Esophagus muscularis mucosa (tissue), 4 donors: ENCODE measurements at regions of chr2 and their contacts with region 1.

Region 1: DNA sequence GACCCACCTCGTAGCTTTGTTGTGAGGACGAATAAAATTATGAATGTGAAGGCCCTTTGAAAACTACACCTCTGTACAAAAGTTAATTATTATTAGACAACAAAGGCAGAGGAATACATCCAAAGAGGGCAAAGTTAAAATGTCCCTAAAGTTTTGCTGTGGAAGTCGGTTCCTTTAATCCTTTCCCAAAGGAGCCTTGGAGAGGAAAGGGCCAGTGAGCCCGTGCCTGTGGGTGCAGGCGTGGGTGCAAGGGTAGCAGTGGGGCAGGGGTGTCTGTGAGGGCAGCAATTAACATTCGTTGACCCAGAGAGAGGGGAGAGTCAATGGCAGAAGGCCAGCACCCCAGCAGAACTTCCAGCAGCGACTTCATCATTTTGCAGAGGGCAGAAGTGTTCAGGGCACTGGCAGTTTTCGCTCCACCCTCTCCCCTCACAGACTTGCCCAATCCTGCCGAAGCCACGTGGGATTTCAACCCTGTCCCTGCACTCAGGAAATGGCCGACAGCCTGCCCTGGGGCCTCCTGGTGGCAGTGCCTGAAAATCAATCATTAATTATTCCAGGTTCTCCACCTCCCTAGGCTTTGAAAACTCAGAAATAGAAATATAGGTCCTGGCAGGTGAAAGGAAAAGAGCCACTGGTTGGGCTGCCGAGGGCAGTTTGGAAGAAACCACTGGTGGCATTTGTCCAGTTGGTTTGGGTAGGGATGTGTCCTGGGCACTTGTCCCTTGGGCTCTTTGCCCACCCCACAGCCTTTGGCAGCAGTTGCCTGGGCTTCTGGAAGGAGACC is 4.2 kb upstream of the PAX8 start:
- DNase-seq: no peak
- H3K4me3 ChIP-seq: no peak overlapping the region
- H3K27ac ChIP-seq: peak overlapping the region; percentile 84 to 94 (median 88)
- H3K4me1 ChIP-seq: peaks cover 20 to 45% (median 38%) of the 10 kb centered on the region in 4 donors
- H3K27me3 ChIP-seq: peaks cover 0 to 11% (median 2%) of the 10 kb centered on the region in 4 donors
- CTCF ChIP-seq: peak in 2 of 3 experiments; percentile 26 to 37
- EP300 ChIP-seq: no peak
- POLR2A ChIP-seq: no peak

Region 2: DNA sequence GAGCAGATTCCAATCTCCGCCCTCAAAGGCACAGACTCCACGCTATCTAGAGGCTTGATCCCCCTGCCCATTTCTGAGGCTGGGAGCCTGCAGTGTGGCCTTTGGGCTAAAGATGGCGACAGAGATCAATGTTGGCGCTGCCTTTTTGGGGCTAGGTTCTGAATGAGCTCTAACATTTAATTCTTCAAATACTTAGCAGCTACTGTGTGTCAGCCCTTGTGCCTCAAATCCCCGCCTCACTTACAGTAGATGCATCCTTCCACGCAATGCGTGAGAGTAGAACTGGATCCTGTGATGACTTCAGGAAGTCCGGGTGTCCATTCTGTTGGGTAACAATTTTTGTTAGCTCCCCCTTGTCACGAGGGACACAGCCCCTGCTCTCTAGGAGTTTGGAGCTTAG is 202.8 kb before region 1 on chr2:
- intact Hi-C with region 1: no loop called
- DNase-seq: no peak
- H3K4me3 ChIP-seq: no peak overlapping the region
- H3K27ac ChIP-seq: no peak overlapping the region
- H3K4me1 ChIP-seq: no peaks in the 10 kb centered on the region
- H3K27me3 ChIP-seq: peaks cover 0 to 18% (median 0%) of the 10 kb centered on the region in 4 donors
- CTCF ChIP-seq: peak; percentile 17 to 43 (median 25)
- EP300 ChIP-seq: no peak
- POLR2A ChIP-seq: no peak

Region 3: GRCh38 chr2:113211226-113212105 is 71.5 kb before region 1 on chr2:
- intact Hi-C with region 1: no loop called
- DNase-seq: no peak
- H3K4me3 ChIP-seq: peak overlapping the region in 3 of 4 donors; percentile 9 to 13 (median 12)
- H3K27ac ChIP-seq: peak overlapping the region; percentile 60 to 68 (median 66)
- H3K4me1 ChIP-seq: peaks cover 27 to 46% (median 43%) of the 10 kb centered on the region in 4 donors
- H3K27me3 ChIP-seq: no peaks in the 10 kb centered on the region
- CTCF ChIP-seq: no peak
- EP300 ChIP-seq: no peak
- POLR2A ChIP-seq: no peak

Region 4: GRCh38 chr2:113324684-113325160 is 41.8 kb after region 1 on chr2:
- intact Hi-C with region 1: loop called (anchors 5 kb)
- DNase-seq: no peak
- H3K4me3 ChIP-seq: peak overlapping the region; percentile 47 to 62 (median 54)
- H3K27ac ChIP-seq: peak overlapping the region; percentile 70 to 81 (median 76)
- H3K4me1 ChIP-seq: peaks cover 0 to 31% (median 26%) of the 10 kb centered on the region in 4 donors
- H3K27me3 ChIP-seq: no peaks in the 10 kb centered on the region
- CTCF ChIP-seq: no peak
- EP300 ChIP-seq: no peak
- POLR2A ChIP-seq: no peak

Region 5: DNA sequence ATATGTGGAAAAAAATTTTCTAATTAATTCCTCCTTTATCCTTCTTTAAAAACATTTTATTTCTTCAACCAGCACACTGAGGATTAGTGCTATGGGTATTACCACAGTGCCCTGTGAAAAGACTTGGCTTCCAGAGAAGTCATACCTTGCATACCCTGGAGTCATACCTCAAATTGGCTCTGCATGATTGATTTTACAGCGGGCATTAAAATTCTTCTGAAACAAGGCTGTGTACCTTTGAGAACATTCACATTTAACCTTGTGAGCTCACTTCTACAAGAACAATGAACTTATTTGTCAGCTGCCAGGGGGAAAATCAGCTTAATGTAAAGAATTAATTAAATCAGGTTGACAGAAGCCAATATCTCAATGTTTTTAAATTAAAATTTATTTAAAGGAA is 428.9 kb after region 1 on chr2:
- intact Hi-C with region 1: no loop called
- DNase-seq: no peak
- H3K4me3 ChIP-seq: no peak overlapping the region
- H3K27ac ChIP-seq: no peak overlapping the region
- H3K4me1 ChIP-seq: no peaks in the 10 kb centered on the region
- H3K27me3 ChIP-seq: no peaks in the 10 kb centered on the region
- CTCF ChIP-seq: no peak
- EP300 ChIP-seq: no peak
- POLR2A ChIP-seq: no peak

Region 6: DNA sequence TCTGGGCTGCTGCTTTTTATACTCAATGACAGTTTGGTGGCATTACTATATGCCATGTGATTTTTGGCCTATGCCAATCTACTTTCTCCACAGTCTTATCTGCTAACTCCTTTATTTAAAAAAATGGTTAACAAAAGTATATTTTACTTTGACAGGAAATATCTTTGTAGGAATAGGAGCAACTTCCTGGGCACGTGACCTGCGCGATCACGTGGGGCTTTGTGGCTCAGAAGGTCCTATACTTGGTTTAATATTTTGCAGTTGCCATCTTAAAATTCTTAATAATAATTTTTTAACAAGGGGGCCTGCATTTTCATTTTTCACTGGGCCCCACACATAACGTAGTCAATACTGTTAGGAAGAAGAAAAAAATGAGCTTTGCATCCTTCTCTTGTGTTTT is 856.6 kb after region 1 on chr2:
- intact Hi-C with region 1: no loop called
- DNase-seq: peak; percentile 47
- H3K4me3 ChIP-seq: no peak overlapping the region
- H3K27ac ChIP-seq: no peak overlapping the region
- H3K4me1 ChIP-seq: no peaks in the 10 kb centered on the region
- H3K27me3 ChIP-seq: no peaks in the 10 kb centered on the region
- CTCF ChIP-seq: no peak
- EP300 ChIP-seq: no peak
- POLR2A ChIP-seq: no peak